Astrocyte of the cerebellum (primary cell): ENCODE measurements at regions of chr1 and their contacts with region 1.

Region 1: DNA sequence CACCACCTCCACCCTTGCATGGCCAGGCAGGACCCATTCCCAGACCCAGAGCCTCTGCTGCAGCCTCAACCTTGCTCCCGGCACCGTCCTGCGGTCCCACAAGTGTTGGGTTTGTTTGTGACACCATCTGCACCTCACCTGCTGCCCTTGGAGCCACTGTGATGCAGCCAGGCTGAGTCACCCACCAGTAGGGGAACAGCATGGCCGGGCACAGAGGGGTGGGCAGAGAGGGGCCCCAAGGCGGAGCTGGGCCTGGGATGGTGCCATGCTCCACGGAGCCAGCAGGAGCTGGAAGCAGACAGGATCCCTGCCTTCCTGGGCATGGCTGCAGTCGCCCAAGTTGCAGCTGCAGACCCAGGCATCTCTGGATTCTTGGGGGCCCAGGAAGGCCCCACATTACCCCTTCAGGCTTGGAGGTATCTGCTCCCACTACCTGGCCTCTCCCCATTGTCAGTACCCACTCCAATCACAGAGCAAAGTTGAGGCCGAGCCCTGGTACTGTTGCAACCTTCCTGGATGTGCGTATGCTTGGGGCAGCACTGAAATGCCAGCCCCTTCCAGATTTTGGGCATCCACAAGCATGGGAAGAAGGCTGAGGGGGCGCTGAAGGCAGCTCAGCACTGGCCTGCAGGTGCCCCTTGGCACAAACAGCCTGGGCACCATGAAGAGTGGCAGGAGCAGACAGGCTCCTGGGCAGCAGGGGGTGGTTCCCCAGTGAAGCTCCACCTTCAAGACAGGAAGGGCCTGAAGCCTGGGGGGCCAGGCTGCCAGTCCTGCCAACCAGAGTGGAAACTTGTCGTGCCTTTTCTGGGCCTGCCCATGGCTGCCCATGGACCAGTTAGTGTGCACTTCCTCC is 172.8 kb downstream of the MATN1 start:
- DNase-seq: no peak
- H3K4me3 ChIP-seq: no peak overlapping the region
- CTCF ChIP-seq: no peak

Region 2: DNA sequence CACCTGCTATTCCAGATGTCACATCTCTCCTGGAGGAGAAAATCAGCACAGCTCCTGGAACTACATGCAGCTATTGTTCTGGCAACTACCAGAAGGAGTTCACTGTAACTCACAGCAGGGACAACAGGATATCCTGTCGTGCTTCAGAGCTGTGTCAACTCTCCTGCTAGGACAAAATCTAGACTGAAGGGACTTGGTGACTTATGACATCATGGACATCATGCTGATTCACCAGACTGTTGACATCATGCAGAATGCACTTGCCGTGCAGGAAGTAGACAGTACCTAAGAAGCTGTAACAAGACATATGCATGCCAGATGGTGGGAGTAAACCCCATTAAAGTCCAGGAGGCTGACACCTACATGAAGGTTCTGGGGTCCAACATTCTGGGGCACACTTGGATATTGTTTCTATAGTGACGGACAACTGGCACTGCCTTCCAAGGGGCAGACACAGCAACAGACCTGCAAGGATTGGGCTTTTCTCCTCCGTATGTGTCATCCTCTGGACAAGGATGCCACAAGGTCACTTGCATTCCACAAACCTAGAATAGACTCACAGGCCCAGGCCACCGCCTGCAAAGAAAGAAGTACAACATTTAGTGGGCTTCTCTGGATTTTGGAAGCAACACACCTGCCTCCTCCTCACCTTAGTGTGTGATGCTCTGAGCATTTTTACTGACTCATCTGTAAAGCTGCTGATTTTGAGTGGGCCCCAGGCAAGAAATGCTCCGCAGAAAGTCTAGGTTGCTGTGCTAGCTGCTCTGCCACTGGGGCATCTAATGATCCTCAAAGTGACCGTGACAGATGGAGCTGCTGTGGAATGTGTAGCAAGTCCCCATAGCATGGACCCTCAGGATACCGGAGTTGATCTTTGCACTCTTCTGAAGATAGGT is 76.4 kb before region 1 on chr1:
- in situ Hi-C with region 1: no loop called
- DNase-seq: no peak
- H3K4me3 ChIP-seq: no peak overlapping the region
- CTCF ChIP-seq: no peak

Region 3: DNA sequence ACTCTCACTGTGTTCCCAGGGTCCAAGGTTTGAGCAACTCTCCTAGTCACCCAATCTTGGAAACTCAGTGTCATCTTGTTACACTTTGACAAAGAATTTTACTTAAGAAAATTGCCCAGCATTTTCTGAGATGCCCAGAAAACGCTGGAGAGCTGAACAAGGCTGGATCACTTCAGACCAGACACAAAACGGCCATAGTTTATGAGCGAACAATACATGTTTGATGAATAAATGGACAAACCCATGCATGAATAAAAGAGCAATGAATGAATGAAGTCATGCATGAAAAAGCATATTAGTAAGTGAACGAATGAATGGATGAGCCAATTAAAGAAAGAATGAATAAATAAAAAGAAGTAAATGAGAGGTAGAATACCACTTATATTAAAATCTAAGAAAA is 69.0 kb after region 1 on chr1:
- in situ Hi-C with region 1: loop called (anchors 5 kb)
- DNase-seq: no peak
- H3K4me3 ChIP-seq: no peak overlapping the region
- CTCF ChIP-seq: no peak

Region 4: GRCh38 chr1:30645807-30646206 is 95.2 kb after region 1 on chr1:
- in situ Hi-C with region 1: no loop called
- DNase-seq: no peak
- H3K4me3 ChIP-seq: no peak overlapping the region
- CTCF ChIP-seq: no peak